ENCODE measurements at regions of chr15 and their contacts with region 1.

Region 1: DNA sequence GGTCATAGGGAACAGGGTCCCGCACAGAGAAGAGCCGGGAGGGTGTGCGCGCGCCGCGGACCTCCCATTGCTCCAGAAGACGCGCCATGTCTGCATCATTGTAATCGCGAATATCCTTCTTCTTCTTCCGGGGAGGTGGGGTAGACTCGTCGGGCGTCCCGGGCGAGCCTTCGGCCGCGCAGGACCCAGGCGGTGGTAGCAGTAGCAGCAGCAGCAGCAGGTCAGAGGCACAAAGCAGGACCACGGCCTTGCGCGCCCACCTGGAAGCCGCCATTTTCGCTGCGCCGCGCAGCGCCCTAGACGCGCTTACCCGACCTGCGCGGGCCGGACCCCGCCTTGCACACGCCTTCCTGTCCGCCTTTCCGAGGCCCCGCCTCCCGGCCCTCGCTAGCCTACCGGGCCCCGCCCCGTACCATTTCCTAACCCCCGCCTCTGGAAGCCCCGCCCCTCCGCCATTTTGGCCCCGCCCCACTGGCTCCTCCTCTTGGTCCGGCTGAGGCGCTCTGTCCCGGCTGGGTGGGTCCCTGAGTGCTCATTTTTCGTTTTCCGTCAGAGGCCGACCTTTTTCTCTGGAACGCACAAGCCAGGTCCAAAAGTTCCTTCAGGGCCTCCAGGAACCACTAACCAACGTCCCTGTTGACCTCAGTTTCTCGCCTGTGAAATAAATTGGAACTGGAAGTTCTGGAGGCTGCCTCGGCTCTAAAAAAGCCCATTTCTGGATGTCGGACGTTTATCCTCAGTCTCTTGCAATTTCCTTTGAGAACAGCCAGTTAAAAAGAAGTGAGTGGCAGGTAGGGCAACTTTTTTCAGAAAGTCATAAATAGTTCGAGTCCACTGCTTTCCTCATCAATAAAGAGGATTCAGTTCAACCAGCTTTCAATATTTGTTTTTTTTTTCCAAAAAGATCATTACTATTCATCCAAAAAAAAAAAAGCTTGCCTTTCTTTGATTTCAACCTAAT is at the start of gene MESD:
- DNase-seq: peak; percentile 92
- H3K4me3 Mint-ChIP-seq: peak within 1 kb of the TSS; percentile 98
- H3K27ac Mint-ChIP-seq: peak within 1 kb of the TSS; percentile 97
- H3K4me1 Mint-ChIP-seq: peaks cover 58% of the 10 kb centered on the region
- H3K27me3 Mint-ChIP-seq: no peaks in the 10 kb centered on the region
- total RNA-seq, gene MESD: 29.5 and 30.2 TPM in 2 replicates

Region 2: DNA sequence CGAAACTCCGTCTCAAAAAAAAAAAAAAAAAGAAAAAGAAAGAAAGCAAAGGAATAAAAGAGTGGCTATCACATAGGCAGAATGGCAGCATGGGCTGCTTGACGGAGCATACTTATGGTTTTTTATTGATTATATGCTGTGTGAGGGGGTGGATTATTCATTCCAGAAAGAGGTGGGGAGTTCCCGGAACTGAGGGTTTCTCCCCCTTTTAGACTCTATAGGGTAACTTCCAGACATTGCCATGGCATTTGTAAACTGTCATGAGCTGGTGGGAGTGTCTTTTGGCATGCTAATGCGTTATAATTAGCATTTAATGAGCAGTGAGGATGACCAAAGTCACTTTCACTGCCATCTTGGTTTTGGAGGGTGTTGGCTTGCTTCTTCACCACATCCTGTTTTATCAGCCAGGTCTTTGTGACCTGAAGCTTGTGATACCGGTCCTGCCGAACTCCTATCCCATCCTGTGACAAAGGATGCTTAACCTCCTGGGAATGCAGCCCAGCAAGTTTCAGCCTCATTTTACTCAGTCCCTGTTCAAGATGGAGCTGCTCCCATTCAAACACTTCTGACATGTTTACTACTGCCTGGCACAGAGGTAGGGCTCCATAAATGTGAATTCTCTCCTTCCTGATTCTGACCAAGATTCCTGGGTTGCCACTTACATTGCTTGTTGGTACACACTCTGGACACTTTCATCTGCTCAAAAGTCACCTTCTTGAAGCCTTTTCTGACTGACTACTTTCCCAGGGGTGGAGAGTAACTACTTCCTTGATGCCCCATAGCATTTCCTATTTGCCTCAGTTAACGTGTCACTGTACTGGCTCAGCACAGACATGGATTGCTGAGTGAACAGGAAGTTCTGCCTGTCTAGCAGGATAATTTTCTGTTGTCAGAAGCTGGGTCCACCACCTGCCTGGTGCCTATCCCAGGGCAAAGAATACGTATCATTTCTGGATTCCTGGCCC is 310.3 kb before region 1 on chr15:
- intact Hi-C with region 1: no loop called
- DNase-seq: no peak
- H3K4me3 Mint-ChIP-seq: no peak overlapping the region
- H3K27ac Mint-ChIP-seq: no peak overlapping the region
- H3K4me1 Mint-ChIP-seq: peaks cover 3% of the 10 kb centered on the region
- H3K27me3 Mint-ChIP-seq: peaks cover 8% of the 10 kb centered on the region

Region 3: GRCh38 chr15:80695104-80695910 is 294.5 kb before region 1 on chr15 and contains the start of gene ABHD17C:
- intact Hi-C with region 1: loop called (anchors 10 kb)
- DNase-seq: peak; percentile 50
- H3K4me3 Mint-ChIP-seq: peak within 1 kb of the TSS; percentile 89
- H3K27ac Mint-ChIP-seq: peak within 1 kb of the TSS; percentile 85
- H3K4me1 Mint-ChIP-seq: peaks cover 22% of the 10 kb centered on the region
- H3K27me3 Mint-ChIP-seq: peaks cover 42% of the 10 kb centered on the region
- total RNA-seq, gene ABHD17C: 4.7 and 5.0 TPM in 2 replicates

Region 4: DNA sequence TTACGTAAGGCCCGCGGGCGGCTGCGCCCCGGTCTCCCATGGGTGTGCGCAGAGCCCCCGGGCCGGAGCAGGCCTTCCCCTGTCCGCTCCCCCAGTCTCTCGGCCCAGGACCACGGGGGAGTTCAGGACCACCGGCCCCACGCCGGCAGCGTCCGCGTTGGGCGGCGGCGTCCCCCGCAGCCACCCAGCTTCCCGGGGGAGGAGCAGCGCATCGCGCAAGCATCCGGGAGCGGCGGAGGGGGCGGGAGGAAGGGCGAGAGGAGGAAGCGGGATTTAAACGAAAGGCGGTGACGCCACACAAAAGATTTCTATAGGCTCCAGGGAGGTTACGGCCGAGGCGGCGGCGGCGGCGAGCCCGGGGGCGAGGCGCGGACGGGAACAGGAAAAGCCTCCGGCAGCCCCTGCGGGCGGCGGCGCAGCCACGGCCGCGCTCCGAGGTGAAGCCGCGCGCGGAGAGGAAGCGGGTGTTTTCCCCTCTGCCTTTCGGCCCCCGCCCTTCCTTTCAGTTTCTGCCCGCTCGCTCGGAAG is 10.9 kb after region 1 on chr15 and contains the start of gene TLNRD1:
- intact Hi-C with region 1: loop called (anchors 1 kb)
- DNase-seq: peak; percentile 89
- H3K4me3 Mint-ChIP-seq: peak within 1 kb of the TSS; percentile 97
- H3K27ac Mint-ChIP-seq: peak within 1 kb of the TSS; percentile 98
- H3K4me1 Mint-ChIP-seq: peaks cover 62% of the 10 kb centered on the region
- H3K27me3 Mint-ChIP-seq: peaks cover 2% of the 10 kb centered on the region
- total RNA-seq, gene TLNRD1: 30.2 and 30.8 TPM in 2 replicates

Region 5: GRCh38 chr15:81400640-81401236 is 410.9 kb after region 1 on chr15:
- intact Hi-C with region 1: loop called (anchors 10 kb)
- DNase-seq: no peak
- H3K4me3 Mint-ChIP-seq: no peak overlapping the region
- H3K27ac Mint-ChIP-seq: no peak overlapping the region
- H3K4me1 Mint-ChIP-seq: no peaks in the 10 kb centered on the region
- H3K27me3 Mint-ChIP-seq: peaks cover 5% of the 10 kb centered on the region